Activated CD4-positive, alpha-beta memory T cell treated with anti-CD3 and anti-CD28 coated beads for 36 hours (primary cell): ENCODE measurements at regions of chr11 and their contacts with region 1.

Region 1: GRCh38 chr11:61776551-61777075 is 15.8 kb downstream of the TMEM258 start:
- DNase-seq: peak; percentile 81
- H3K4me3 Mint-ChIP-seq: peak overlapping the region; percentile 39
- H3K27ac Mint-ChIP-seq: no peak overlapping the region
- H3K4me1 Mint-ChIP-seq: peaks cover 9% of the 10 kb centered on the region
- H3K27me3 Mint-ChIP-seq: peaks cover 2% of the 10 kb centered on the region

Region 2: GRCh38 chr11:61357233-61357893 is 419.2 kb before region 1 on chr11:
- CTCF ChIA-PET with region 1: no interaction called
- POLR2A ChIA-PET with region 1: no interaction called
- intact Hi-C with region 1: no loop called
- DNase-seq: no peak
- H3K4me3 Mint-ChIP-seq: no peak overlapping the region
- H3K27ac Mint-ChIP-seq: no peak overlapping the region
- H3K4me1 Mint-ChIP-seq: peaks cover 22% of the 10 kb centered on the region
- H3K27me3 Mint-ChIP-seq: no peaks in the 10 kb centered on the region

Region 3: GRCh38 chr11:61747192-61747966 is 29.2 kb before region 1 on chr11:
- CTCF ChIA-PET with region 1: interaction called, 10 read pairs
- POLR2A ChIA-PET with region 1: no interaction called
- intact Hi-C with region 1: no loop called
- DNase-seq: peak; percentile 66
- H3K4me3 Mint-ChIP-seq: no peak overlapping the region
- H3K27ac Mint-ChIP-seq: no peak overlapping the region
- H3K4me1 Mint-ChIP-seq: peaks cover 2% of the 10 kb centered on the region
- H3K27me3 Mint-ChIP-seq: peaks cover 18% of the 10 kb centered on the region

Region 4: DNA sequence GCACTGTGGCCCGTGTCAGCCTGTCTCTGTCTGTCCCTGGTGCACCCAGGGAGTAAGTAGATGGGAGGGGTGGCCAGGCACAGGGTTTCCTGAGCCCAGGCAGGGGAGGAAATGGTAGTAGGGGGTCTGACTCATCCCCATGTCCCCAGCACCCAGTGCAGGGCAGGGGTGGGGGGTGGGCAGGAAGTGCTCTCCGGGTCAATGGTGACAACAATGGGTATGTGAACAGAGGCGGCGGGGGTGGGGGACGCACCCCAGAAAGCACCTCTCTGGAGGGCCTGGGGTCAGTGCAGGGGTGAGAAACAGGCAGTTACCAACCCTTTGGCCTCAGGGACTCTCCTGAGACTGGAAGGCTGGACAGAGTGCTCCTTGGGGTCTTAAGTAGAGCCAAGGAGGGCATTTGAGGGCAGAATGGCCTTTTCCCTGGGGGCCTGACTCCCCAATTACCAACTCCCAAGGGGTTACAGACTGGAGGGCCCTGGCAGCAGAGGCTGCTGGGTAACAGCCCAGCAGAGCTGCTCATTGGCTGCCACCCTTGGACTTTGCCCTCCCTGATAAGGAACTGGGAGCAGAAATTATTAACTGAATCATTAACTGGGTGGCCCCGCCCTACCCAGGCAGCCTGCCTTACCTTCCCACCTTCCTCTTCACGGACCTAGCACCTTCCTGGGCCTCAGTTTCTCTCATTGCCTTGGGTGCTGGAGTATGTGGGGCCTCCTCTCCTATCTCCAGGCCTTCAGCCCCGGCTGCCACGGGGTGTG is 20.0 kb before region 1 on chr11:
- CTCF ChIA-PET with region 1: no interaction called
- POLR2A ChIA-PET with region 1: no interaction called
- intact Hi-C with region 1: loop called (anchors 2 kb)
- DNase-seq: peak; percentile 69
- H3K4me3 Mint-ChIP-seq: no peak overlapping the region
- H3K27ac Mint-ChIP-seq: no peak overlapping the region
- H3K4me1 Mint-ChIP-seq: peaks cover 18% of the 10 kb centered on the region
- H3K27me3 Mint-ChIP-seq: peaks cover 15% of the 10 kb centered on the region